ENCODE measurements at regions of chr18 and their contacts with region 1.

Region 1: DNA sequence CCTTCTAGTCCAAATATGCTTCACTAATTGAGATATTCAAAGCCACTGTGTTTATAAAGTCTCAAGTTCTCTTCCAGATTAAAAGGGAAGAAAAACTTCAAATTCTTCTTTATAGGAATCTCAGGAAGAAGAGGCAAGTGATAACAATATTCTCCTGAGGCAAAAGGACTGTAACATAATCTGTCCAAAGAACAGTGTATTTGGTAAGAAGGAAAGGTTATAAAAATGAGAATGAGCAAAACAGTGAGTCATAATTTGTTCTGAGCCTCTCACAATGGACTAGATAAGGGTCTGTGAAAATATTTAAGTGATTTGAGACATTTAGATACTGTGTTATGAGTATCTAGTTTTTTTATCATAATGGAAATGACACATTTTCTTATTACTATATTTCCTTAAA is 44.3 kb downstream of the SNRPD1 start:
- DNase-seq: no peak
- ATAC-seq: no peak
- H3K4me3 Mint-ChIP-seq: no peak overlapping the region
- H3K27ac Mint-ChIP-seq: no peak overlapping the region
- H3K4me1 Mint-ChIP-seq: no peaks in the 10 kb centered on the region
- H3K27me3 Mint-ChIP-seq: no peaks in the 10 kb centered on the region
- CTCF ChIP-seq: no peak

Region 2: GRCh38 chr18:21629089-21629832 is 27.1 kb before region 1 on chr18:
- CTCF ChIA-PET with region 1: no interaction called
- POLR2A ChIA-PET with region 1: interaction called, 18 read pairs
- intact Hi-C with region 1: no loop called
- DNase-seq: no peak
- ATAC-seq: peak; percentile 84
- H3K4me3 Mint-ChIP-seq: peak overlapping the region; percentile 1
- H3K27ac Mint-ChIP-seq: peak overlapping the region; percentile 51
- H3K4me1 Mint-ChIP-seq: peaks cover 22% of the 10 kb centered on the region
- H3K27me3 Mint-ChIP-seq: no peaks in the 10 kb centered on the region
- CTCF ChIP-seq: no peak

Region 3: GRCh38 chr18:22057908-22058527 is 401.6 kb after region 1 on chr18:
- CTCF ChIA-PET with region 1: no interaction called
- POLR2A ChIA-PET with region 1: no interaction called
- intact Hi-C with region 1: no loop called
- DNase-seq: no peak
- ATAC-seq: no peak
- H3K4me3 Mint-ChIP-seq: no peak overlapping the region
- H3K27ac Mint-ChIP-seq: no peak overlapping the region
- H3K4me1 Mint-ChIP-seq: no peaks in the 10 kb centered on the region
- H3K27me3 Mint-ChIP-seq: no peaks in the 10 kb centered on the region
- CTCF ChIP-seq: no peak

Region 4: DNA sequence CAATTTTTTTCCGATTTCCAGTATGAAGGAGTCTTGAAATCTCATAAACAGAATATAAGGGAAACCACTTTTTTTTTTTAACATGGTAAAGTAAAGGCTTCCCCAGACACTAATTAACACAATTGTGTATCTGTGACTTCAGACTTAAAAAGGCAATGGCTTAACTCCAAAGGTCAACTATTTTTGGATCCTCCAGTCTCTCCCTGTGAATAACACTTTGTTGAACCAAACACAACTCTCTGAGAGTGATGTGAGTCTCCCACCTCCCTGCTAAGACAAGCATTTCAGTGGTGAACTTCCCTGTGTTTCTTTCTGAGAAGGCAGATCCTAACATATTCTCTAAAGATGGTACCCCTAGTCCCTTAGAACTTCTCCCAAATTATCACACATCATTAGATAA is 1057.1 kb after region 1 on chr18:
- CTCF ChIA-PET with region 1: no interaction called
- POLR2A ChIA-PET with region 1: no interaction called
- intact Hi-C with region 1: no loop called
- DNase-seq: no peak
- ATAC-seq: no peak
- H3K4me3 Mint-ChIP-seq: no peak overlapping the region
- H3K27ac Mint-ChIP-seq: no peak overlapping the region
- H3K4me1 Mint-ChIP-seq: no peaks in the 10 kb centered on the region
- H3K27me3 Mint-ChIP-seq: no peaks in the 10 kb centered on the region
- CTCF ChIP-seq: no peak

Measured in activated B cell treated with CpG ODN at 0.5 μM for 24 hours (primary cell).